Right ventricle myocardium superior (tissue), 1 donor: ENCODE measurements at regions of chr4 and their contacts with region 1.

Region 1: GRCh38 chr4:53490965-53491622 is 100.2 kb downstream of the LNX1 start:
- DNase-seq: no peak
- ATAC-seq: peak; percentile 78

Region 2: GRCh38 chr4:53656421-53657046 is 165.4 kb after region 1 on chr4:
- intact Hi-C with region 1: loop called (anchors 5 kb)
- DNase-seq: no peak
- ATAC-seq: peak; percentile 66

Region 3: DNA sequence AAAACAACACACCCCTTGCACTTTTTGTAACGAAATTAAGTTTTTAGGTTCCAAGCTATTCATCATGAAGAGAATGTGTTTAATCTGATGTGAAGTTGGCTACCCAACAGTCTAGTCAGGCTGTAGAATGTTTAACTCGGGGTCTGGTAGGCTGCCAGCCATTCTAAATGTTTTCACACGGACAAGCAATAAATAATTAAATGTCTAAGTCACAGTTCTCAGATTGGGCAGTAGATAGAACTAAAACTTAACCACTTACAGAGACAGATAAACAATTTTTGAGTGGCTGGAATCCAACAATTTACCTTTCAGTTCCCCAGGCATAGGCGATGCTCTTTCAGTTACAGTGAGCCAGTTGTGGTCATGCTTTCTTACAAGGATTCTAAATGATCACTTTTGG is 506.8 kb after region 1 on chr4:
- intact Hi-C with region 1: no loop called
- DNase-seq: no peak
- ATAC-seq: no peak